AG04449 (cell line): ENCODE measurements at regions of chr5 and their contacts with region 1.

Region 1: GRCh38 chr5:17132444-17133083 is 84.9 kb upstream of the BASP1 start:
- DNase-seq: no peak
- H3K4me3 ChIP-seq: no peak overlapping the region
- CTCF ChIP-seq: peak; percentile 45

Region 2: DNA sequence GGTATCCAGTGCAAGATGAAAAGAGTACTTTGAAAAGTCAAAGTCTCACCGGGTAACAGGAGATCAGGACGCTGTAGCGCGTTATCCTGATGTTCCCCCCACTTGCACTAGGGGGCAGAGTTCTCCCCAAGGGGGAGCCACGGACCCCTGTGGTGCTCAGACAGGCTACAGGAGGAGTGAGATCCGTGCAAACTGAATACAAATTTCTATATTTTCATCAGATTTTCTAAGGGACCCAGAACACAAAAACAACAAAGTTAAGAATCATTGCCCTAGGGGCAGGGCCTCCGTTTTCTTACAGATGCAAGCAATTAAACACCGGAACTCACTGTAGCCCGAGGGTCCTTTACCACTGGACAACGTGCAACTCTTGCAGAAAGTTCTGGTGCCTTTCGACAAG is 198.4 kb before region 1 on chr5:
- CTCF ChIA-PET with region 1: interaction called, 121 read pairs
- POLR2A ChIA-PET with region 1: interaction called, 4 read pairs
- DNase-seq: no peak
- H3K4me3 ChIP-seq: peak overlapping the region; percentile 67
- CTCF ChIP-seq: peak; percentile 93

Region 3: DNA sequence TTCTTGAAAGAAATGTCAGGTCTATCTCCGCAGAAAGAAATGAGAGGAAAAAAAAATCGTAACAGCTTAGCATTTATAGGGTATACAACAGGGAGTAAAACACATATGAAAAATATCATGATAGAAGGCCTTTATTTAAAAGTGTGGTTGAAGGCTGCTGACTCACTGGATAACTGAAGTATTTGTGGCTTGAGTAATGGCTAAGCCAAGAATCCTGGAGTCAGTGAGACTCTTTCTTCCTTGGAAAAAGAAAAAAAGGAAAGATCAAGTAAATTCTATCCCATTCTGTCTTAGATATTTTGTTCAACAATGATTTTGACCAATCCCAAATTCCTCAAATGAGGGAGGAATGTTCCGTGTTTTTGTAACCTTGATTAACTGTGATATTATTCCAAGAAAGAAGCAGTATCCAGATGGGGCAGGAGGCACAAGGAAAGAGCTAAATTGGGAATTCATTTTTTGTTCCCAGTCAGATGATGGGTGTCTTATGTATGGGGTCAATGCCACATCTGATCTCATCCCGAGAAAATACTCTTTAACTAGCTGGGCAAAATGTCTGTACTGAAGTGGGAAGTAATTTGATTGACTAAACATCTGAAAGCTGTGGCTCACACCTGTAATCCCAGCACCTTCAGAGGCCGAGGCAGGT is 132.1 kb before region 1 on chr5:
- CTCF ChIA-PET with region 1: interaction called, 13 read pairs
- POLR2A ChIA-PET with region 1: no interaction called
- DNase-seq: peak; percentile 94
- H3K4me3 ChIP-seq: no peak overlapping the region
- CTCF ChIP-seq: no peak

Region 4: GRCh38 chr5:17118631-17119030 is 13.9 kb before region 1 on chr5:
- CTCF ChIA-PET with region 1: interaction called, 58 read pairs
- POLR2A ChIA-PET with region 1: interaction called, 3 read pairs
- DNase-seq: peak; percentile 80
- H3K4me3 ChIP-seq: no peak overlapping the region
- CTCF ChIP-seq: no peak

Region 5: DNA sequence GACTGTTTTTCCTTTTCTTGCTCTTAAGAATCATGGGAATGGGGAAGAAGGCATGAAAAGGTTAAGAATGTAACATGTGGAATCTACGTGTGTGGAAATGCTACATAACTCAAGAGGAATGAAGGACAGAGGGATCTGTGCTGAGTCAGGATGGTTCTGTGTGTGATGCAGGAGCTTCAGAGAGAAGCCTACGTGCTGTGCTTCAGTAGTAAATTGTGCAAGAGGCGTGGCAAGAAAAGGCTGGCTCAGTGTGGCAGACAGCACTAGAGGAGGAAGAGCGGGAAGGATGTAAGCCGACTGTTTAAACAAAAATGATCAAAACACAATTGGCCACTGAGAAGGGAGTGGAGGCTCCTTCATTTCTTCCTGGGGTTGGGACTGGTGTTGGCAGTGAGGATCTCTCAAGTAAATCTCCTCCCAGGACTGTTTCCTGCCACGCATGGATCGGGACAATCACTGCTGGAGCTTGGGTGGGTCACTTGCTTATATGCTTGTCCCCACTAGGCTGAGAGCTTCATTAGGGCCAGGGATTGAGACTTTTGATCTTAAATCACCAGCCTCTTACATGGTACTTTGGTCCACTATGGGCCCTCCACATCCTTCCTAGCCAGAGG is 25.5 kb after region 1 on chr5:
- CTCF ChIA-PET with region 1: interaction called, 110 read pairs
- POLR2A ChIA-PET with region 1: interaction called, 4 read pairs
- DNase-seq: peak; percentile 100
- H3K4me3 ChIP-seq: no peak overlapping the region
- CTCF ChIP-seq: no peak